AG04450 (cell line): ENCODE measurements at regions of chr1 and their contacts with region 1.

Region 1: GRCh38 chr1:87084244-87084836 is 169.9 kb downstream of the HS2ST1 start:
- DNase-seq: no peak
- H3K4me3 ChIP-seq: no peak overlapping the region
- H3K27ac ChIP-seq: no peak overlapping the region
- H3K27me3 ChIP-seq: no peaks in the 10 kb centered on the region
- CTCF ChIP-seq: peak; percentile 47

Region 2: GRCh38 chr1:86704458-86704971 is 379.8 kb before region 1 on chr1 and contains the start of gene SH3GLB1:
- CTCF ChIA-PET with region 1: interaction called, 16 read pairs
- POLR2A ChIA-PET with region 1: no interaction called
- DNase-seq: peak; percentile 61
- H3K4me3 ChIP-seq: peak within 1 kb of the TSS; percentile 83
- H3K27ac ChIP-seq: peak within 1 kb of the TSS; percentile 91
- H3K27me3 ChIP-seq: no peaks in the 10 kb centered on the region
- CTCF ChIP-seq: peak; percentile 84
- polyA plus RNA-seq, gene SH3GLB1: 61.3 and 75.9 TPM in 2 replicates

Region 3: GRCh38 chr1:86779308-86780191 is 304.8 kb before region 1 on chr1:
- CTCF ChIA-PET with region 1: interaction called, 48 read pairs
- POLR2A ChIA-PET with region 1: no interaction called
- DNase-seq: no peak
- H3K4me3 ChIP-seq: no peak overlapping the region
- H3K27ac ChIP-seq: no peak overlapping the region
- H3K27me3 ChIP-seq: no peaks in the 10 kb centered on the region
- CTCF ChIP-seq: no peak

Region 4: DNA sequence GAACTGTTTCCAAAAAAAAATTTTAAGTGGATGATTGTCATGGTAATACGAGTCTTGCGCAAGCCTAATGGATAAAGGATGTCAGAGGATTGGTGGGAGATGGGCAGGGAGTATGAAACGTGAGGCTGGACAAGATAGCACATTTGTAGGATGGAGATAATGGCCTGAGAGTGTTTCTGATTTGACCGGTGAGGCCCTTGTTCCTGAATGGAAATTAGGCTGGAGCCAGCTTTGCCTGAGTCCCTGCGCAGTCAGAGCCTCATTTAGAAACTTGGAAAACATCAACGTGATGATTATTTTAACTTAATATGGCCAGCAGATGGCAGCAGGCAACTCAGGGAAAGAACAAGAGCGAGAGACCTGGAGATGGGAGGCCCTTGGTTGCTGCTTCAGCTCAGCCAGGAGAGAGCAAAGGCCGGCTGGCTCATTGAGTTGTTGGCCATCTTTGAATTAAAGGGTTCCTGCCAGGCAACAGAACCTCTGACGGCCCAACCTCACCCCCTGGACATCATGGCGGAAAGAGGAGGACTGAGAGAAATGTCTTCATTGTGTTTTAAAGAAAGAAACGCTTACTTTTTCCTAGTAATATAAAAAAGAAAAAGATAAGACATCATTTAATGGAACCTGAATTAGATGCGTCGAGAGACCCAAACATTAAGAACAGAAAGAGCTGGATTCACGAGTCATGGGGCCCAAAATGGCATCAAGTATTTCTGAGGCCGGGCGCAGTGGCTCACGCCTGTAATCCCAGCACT is 250.7 kb before region 1 on chr1:
- CTCF ChIA-PET with region 1: interaction called, 81 read pairs
- POLR2A ChIA-PET with region 1: no interaction called
- DNase-seq: peak; percentile 74
- H3K4me3 ChIP-seq: no peak overlapping the region
- H3K27ac ChIP-seq: no peak overlapping the region
- H3K27me3 ChIP-seq: no peaks in the 10 kb centered on the region
- CTCF ChIP-seq: peak; percentile 60

Region 5: GRCh38 chr1:86913896-86914634 is 170.3 kb before region 1 on chr1 and contains the start of gene SELENOF:
- CTCF ChIA-PET with region 1: interaction called, 13 read pairs
- POLR2A ChIA-PET with region 1: no interaction called
- DNase-seq: peak; percentile 100
- H3K4me3 ChIP-seq: peak within 1 kb of the TSS; percentile 100
- H3K27ac ChIP-seq: peak within 1 kb of the TSS; percentile 86
- H3K27me3 ChIP-seq: no peaks in the 10 kb centered on the region
- CTCF ChIP-seq: no peak
- polyA plus RNA-seq, gene SELENOF: 248 and 358 TPM in 2 replicates

Region 6: GRCh38 chr1:86965012-86965826 is 119.1 kb before region 1 on chr1:
- CTCF ChIA-PET with region 1: interaction called, 13 read pairs
- POLR2A ChIA-PET with region 1: no interaction called
- DNase-seq: peak; percentile 15
- H3K4me3 ChIP-seq: no peak overlapping the region
- H3K27ac ChIP-seq: no peak overlapping the region
- H3K27me3 ChIP-seq: no peaks in the 10 kb centered on the region
- CTCF ChIP-seq: peak; percentile 76

Region 7: GRCh38 chr1:87074001-87074795 is 10.1 kb before region 1 on chr1:
- CTCF ChIA-PET with region 1: interaction called, 27 read pairs
- POLR2A ChIA-PET with region 1: no interaction called
- DNase-seq: no peak
- H3K4me3 ChIP-seq: no peak overlapping the region
- H3K27ac ChIP-seq: no peak overlapping the region
- H3K27me3 ChIP-seq: no peaks in the 10 kb centered on the region
- CTCF ChIP-seq: no peak